Activated CD4-positive, alpha-beta T cell treated with anti-CD3 and anti-CD28 coated beads, Interleukin-2, amount 10 ng/mL, durations not matched to agents 24 days and 14 days (primary cell): ENCODE measurements at regions of chr18 and their contacts with region 1.

Region 1: GRCh38 chr18:44679056-44679905 is 1.4 kb upstream of the SETBP1 start:
- DNase-seq: peak; percentile 93
- H3K4me3 Mint-ChIP-seq: no peak overlapping the region
- H3K27ac Mint-ChIP-seq: peak overlapping the region; percentile 60
- H3K4me1 Mint-ChIP-seq: peaks cover 6% of the 10 kb centered on the region
- H3K27me3 Mint-ChIP-seq: peaks cover 31% of the 10 kb centered on the region

Region 2: GRCh38 chr18:44358402-44358801 is 320.9 kb before region 1 on chr18:
- intact Hi-C with region 1: loop called (anchors 10 kb)
- DNase-seq: no peak
- H3K4me3 Mint-ChIP-seq: no peak overlapping the region
- H3K27ac Mint-ChIP-seq: no peak overlapping the region
- H3K4me1 Mint-ChIP-seq: no peaks in the 10 kb centered on the region
- H3K27me3 Mint-ChIP-seq: no peaks in the 10 kb centered on the region

Region 3: GRCh38 chr18:44691148-44691925 is 12.1 kb after region 1 on chr18:
- intact Hi-C with region 1: no loop called
- DNase-seq: no peak
- H3K4me3 Mint-ChIP-seq: no peak overlapping the region
- H3K27ac Mint-ChIP-seq: no peak overlapping the region
- H3K4me1 Mint-ChIP-seq: peaks cover 12% of the 10 kb centered on the region
- H3K27me3 Mint-ChIP-seq: peaks cover 57% of the 10 kb centered on the region

Region 4: GRCh38 chr18:44725300-44726096 is 46.2 kb after region 1 on chr18:
- intact Hi-C with region 1: loop called (anchors 1 kb)
- DNase-seq: peak; percentile 91
- H3K4me3 Mint-ChIP-seq: peak overlapping the region; percentile 72
- H3K27ac Mint-ChIP-seq: peak overlapping the region; percentile 93
- H3K4me1 Mint-ChIP-seq: peaks cover 80% of the 10 kb centered on the region
- H3K27me3 Mint-ChIP-seq: peaks cover 2% of the 10 kb centered on the region

Region 5: GRCh38 chr18:44799907-44800421 is 120.7 kb after region 1 on chr18:
- intact Hi-C with region 1: loop called (anchors 1 kb)
- DNase-seq: peak; percentile 56
- H3K4me3 Mint-ChIP-seq: peak overlapping the region; percentile 58
- H3K27ac Mint-ChIP-seq: peak overlapping the region; percentile 18
- H3K4me1 Mint-ChIP-seq: peaks cover 59% of the 10 kb centered on the region
- H3K27me3 Mint-ChIP-seq: no peaks in the 10 kb centered on the region

Region 6: GRCh38 chr18:44895176-44895798 is 216.0 kb after region 1 on chr18:
- intact Hi-C with region 1: loop called (anchors 1 kb)
- DNase-seq: peak; percentile 73
- H3K4me3 Mint-ChIP-seq: no peak overlapping the region
- H3K27ac Mint-ChIP-seq: peak overlapping the region; percentile 53
- H3K4me1 Mint-ChIP-seq: peaks cover 41% of the 10 kb centered on the region
- H3K27me3 Mint-ChIP-seq: peaks cover 6% of the 10 kb centered on the region

Region 7: GRCh38 chr18:45384137-45384961 is 705.1 kb after region 1 on chr18:
- intact Hi-C with region 1: loop called (anchors 10 kb)
- DNase-seq: peak; percentile 79
- H3K4me3 Mint-ChIP-seq: no peak overlapping the region
- H3K27ac Mint-ChIP-seq: no peak overlapping the region
- H3K4me1 Mint-ChIP-seq: no peaks in the 10 kb centered on the region
- H3K27me3 Mint-ChIP-seq: peaks cover 15% of the 10 kb centered on the region